Dorsolateral prefrontal cortex (tissue), 120 donors: ENCODE measurements at regions of chr14 and their contacts with region 1.

Region 1: DNA sequence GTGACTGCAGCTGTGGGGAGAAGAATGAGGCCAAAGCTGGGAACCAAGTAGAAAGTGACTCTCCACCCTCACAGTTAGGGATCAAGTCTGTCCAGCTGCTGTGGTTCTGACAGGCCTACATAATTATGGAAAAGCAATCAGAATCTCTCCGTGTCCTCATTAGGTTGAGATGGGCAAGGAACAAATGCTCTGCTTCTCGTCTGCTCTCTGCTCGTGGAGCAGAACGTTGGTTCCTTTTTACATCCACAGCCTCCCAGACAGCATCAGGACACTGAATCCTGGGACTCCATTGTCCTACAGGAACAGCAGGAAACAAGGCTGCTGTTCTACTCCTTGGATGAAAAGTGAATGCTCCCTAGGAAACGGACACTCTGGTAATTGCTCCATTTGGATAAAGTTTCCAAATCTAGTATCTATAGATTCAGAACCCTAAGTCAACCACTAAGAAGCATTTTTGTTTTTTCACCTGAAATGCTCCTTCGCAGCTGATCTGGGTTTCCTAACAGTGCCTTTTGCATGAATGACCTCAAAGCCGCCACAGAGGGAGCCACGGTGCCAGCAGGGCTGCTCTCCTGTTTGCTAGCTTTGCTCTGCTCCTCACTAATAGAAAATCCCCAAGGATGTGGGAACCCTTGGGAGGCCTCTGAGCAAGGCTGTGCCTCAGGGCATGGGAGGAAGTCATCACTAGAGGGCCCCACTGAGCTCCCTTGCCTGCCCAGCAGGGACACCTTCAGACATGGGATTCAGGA is 102.0 kb downstream of the EGLN3 start:
- DNase-seq: peak; percentile 30 to 82 (median 72)
- H3K4me3 ChIP-seq: no peak overlapping the region
- H3K27ac ChIP-seq: peak overlapping the region; percentile 3 to 99 (median 94)
- H3K27me3 ChIP-seq: no peaks in the 10 kb centered on the region
- CTCF ChIP-seq: peak; percentile 13 to 87 (median 72)

Region 2: GRCh38 chr14:33792720-33793368 is 56.0 kb before region 1 on chr14:
- intact Hi-C with region 1: no loop called
- DNase-seq: peak; percentile 76 to 91 (median 84)
- H3K4me3 ChIP-seq: peak overlapping the region; percentile 14 to 65 (median 44)
- H3K27ac ChIP-seq: peak overlapping the region in 56 of 59 donors; percentile 2 to 89 (median 73)
- H3K27me3 ChIP-seq: no peaks in the 10 kb centered on the region
- CTCF ChIP-seq: peak; percentile 85 to 98 (median 96)

Region 3: GRCh38 chr14:33950320-33951182 is 101.7 kb after region 1 on chr14 and contains the start of gene EGLN3:
- intact Hi-C with region 1: loop called (anchors 1 to 5 kb)
- DNase-seq: peak; percentile 81 to 96 (median 92)
- H3K4me3 ChIP-seq: peak within 1 kb of the TSS; percentile 54 to 98 (median 76)
- H3K27ac ChIP-seq: peak within 1 kb of the TSS in 57 of 59 donors; percentile 1 to 91 (median 79)
- H3K27me3 ChIP-seq: peaks cover 0 to 53% (median 11%) of the 10 kb centered on the region in 45 donors
- CTCF ChIP-seq: peak in 11 of 56 donors; percentile 8 to 35 (median 17)
- total RNA-seq, gene EGLN3: 20.5 to 69.6 (median 37.7) TPM

Region 4: GRCh38 chr14:34030864-34031263 is 182.0 kb after region 1 on chr14:
- intact Hi-C with region 1: loop called in 1 of 2 experiments (anchors 5 kb)
- DNase-seq: peak in 7 of 10 donors; percentile 15 to 73 (median 50)
- H3K4me3 ChIP-seq: no peak overlapping the region
- H3K27ac ChIP-seq: peak overlapping the region in 1 of 59 donors; percentile 9
- H3K27me3 ChIP-seq: no peaks in the 10 kb centered on the region
- CTCF ChIP-seq: no peak